Aorta (tissue), 5 donors: ENCODE measurements at regions of chr14 and their contacts with region 1.

Region 1: DNA sequence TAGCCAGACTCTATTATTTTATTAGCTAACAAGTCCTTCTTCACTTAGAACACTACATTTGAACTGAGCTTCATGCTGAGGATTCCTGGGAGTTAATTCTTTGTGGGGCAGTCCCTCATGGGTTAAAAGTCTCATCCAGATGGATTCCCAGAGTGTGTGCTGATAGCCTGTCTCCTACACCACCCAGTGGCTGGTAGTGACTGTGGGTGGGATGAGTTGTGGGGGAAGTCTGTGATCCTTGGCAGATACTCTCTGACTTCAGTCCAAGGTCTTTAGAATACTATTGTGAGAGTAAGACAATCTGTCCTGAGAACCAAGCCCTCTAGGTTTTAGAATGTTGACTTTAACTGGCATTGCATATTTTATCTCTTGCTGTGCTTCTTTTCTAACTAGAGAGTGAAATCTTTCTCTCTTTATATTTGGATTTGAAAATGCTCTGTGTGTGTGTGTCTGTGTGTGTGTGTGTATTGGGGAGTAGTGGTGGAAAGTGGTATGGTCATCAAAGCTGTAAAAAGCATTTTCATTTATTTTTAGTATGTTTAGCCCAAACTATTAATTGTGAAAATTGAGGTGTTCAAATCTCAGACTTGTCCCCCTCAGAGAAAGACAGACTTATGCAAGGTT is 37.3 kb downstream of the AKAP6 start:
- DNase-seq: no peak
- ATAC-seq: no peak
- H3K4me3 ChIP-seq: no peak overlapping the region
- H3K27ac ChIP-seq: peak overlapping the region in 1 of 2 donors; percentile 57
- H3K4me1 ChIP-seq: peaks cover 3 to 4% of the 10 kb centered on the region in 2 donors
- H3K27me3 ChIP-seq: no peaks in the 10 kb centered on the region

Region 2: GRCh38 chr14:32083789-32084188 is 282.6 kb before region 1 on chr14:
- intact Hi-C with region 1: loop called in 1 of 2 experiments (anchors 5 kb)
- DNase-seq: no peak
- ATAC-seq: no peak
- H3K4me3 ChIP-seq: no peak overlapping the region
- H3K27ac ChIP-seq: no peak overlapping the region
- H3K4me1 ChIP-seq: peaks cover 0 to 2% of the 10 kb centered on the region in 2 donors
- H3K27me3 ChIP-seq: no peaks in the 10 kb centered on the region

Region 3: GRCh38 chr14:32417956-32418552 is 51.7 kb after region 1 on chr14:
- intact Hi-C with region 1: loop called in 1 of 2 experiments (anchors 5 kb)
- DNase-seq: no peak
- ATAC-seq: no peak
- H3K4me3 ChIP-seq: no peak overlapping the region
- H3K27ac ChIP-seq: no peak overlapping the region
- H3K4me1 ChIP-seq: peaks cover 0 to 5% of the 10 kb centered on the region in 2 donors
- H3K27me3 ChIP-seq: no peaks in the 10 kb centered on the region